Activated CD4-positive, alpha-beta T cell treated with anti-CD3 and anti-CD28 coated beads, Interleukin-2, amount 10 ng/mL, durations not matched to agents 24 days and 14 days (primary cell): ENCODE measurements at regions of chr20 and their contacts with region 1.

Region 1: GRCh38 chr20:43448748-43449535 is 8.8 kb upstream of the SRSF6 start:
- DNase-seq: peak; percentile 82
- H3K4me3 Mint-ChIP-seq: no peak overlapping the region
- H3K27ac Mint-ChIP-seq: no peak overlapping the region
- H3K4me1 Mint-ChIP-seq: peaks cover 3% of the 10 kb centered on the region
- H3K27me3 Mint-ChIP-seq: peaks cover 23% of the 10 kb centered on the region

Region 2: DNA sequence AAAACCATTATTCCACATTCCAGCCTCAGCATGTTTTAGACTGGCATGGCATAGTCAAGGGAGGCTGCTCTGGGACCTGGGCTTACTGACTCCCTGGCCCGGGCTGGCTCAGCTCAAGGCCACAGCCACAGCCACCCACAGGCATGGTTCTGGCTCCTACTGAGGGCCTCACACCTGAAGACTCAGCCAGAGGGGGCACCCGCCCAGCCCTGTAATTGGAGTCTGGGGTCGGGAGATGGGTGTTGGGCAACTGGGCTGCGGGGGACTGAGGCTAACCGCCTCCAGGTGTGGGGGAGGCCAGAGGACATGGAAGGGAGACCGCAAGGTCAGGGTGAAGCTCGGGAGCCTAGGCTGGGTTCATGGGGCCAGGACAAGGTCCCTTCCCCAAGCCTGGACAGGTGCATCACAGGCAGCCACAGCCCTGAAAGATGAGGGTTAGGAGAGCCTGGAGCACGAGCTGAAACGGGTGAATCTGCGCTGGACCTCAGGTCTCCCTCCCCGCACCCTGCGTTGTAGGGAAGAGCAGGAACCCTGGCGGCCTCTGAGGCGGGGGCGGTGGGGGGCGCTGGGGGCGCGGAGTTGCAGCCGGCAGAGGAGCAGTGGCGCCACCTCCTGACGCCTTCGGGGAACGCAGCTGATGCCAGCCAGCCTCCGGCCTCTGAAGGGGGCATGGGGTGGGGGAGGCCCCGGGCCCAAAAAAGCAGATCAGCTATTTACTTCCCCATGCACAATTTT is 58.9 kb before region 1 on chr20:
- intact Hi-C with region 1: no loop called
- DNase-seq: no peak
- H3K4me3 Mint-ChIP-seq: no peak overlapping the region
- H3K27ac Mint-ChIP-seq: no peak overlapping the region
- H3K4me1 Mint-ChIP-seq: no peaks in the 10 kb centered on the region
- H3K27me3 Mint-ChIP-seq: peaks cover 5% of the 10 kb centered on the region

Region 3: DNA sequence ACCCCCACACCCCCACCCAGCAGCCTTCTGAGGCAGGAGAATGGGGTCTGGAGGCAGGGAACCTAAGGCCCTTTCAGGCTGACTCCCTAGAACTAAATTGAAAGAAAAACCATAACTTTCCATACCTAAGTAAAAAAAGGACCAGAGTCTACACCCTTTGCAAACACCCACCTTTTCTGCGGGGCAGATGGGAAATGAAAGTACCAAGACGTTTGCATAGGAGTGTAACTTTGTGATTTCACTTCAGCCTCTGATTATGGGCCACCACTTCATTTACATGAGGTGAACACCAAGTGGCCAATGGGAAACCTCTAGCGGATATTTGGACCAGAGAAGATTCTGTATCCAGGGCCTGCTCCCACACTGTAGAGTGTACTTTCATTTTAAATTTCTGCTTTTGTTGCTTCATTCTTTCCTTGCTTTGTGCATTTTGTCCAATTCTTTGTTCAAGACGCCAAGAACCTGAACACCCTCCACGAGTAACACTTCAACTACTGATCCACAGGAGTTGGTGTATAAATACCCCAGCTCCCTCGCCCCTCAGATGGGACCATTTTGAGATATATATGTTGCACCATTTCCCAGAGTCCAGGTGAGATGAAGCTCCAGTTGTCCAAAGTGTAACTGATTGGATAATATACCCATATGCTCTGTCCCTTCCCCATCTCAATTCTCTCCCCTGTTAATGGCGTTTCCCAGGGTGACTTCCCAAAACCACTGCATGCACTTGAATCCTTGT is 10.2 kb before region 1 on chr20:
- intact Hi-C with region 1: no loop called
- DNase-seq: no peak
- H3K4me3 Mint-ChIP-seq: no peak overlapping the region
- H3K27ac Mint-ChIP-seq: no peak overlapping the region
- H3K4me1 Mint-ChIP-seq: peaks cover 2% of the 10 kb centered on the region
- H3K27me3 Mint-ChIP-seq: peaks cover 6% of the 10 kb centered on the region

Region 4: DNA sequence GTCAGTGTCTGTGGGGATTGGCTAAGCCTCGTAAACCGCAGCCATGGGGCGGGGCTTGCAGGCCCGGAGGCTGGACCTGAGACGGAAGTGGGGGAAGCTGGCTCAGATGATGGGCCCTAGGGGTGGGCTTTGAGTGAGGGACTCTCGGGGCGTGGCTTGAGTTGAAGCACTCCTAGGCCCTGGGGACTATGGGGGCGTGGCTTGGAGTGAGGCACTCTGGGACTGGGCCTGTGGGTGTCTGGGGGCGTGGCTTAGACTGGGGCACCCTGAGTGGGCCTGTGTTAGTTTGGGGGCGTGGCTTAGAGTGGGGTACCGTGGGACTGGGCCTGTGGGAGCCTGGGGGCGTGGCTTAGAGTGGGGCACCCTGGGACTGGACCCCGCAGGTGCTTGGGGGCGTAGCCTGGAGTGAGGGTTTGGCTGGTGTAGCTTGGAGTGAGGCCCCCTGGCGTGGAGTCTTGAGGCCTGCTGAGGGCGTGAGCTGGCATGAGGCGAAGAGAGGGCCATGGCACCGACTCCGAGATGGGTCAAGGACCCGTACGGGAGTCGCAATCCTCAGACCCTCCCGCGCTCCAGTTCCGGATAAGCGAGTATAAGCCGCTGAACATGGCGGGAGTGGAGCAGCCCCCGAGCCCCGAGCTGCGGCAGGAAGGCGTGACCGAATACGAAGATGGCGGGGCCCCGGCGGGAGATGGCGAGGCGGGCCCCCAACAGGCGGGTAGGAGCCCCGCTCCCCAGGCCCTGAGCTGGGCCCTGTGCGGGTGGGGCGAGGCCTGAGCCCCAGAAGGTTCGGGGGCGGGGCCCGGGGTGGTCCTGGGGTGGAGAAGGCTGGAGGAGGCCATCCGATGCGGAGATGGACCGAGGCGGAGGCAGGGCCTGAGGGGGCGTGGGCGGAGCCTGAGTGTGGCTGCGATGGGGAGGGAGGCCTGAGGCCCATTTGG is 65.4 kb after region 1 on chr20:
- intact Hi-C with region 1: loop called (anchors 1 kb)
- DNase-seq: peak; percentile 97
- H3K4me3 Mint-ChIP-seq: peak overlapping the region; percentile 97
- H3K27ac Mint-ChIP-seq: peak overlapping the region; percentile 93
- H3K4me1 Mint-ChIP-seq: peaks cover 6% of the 10 kb centered on the region
- H3K27me3 Mint-ChIP-seq: peaks cover 2% of the 10 kb centered on the region

Region 5: DNA sequence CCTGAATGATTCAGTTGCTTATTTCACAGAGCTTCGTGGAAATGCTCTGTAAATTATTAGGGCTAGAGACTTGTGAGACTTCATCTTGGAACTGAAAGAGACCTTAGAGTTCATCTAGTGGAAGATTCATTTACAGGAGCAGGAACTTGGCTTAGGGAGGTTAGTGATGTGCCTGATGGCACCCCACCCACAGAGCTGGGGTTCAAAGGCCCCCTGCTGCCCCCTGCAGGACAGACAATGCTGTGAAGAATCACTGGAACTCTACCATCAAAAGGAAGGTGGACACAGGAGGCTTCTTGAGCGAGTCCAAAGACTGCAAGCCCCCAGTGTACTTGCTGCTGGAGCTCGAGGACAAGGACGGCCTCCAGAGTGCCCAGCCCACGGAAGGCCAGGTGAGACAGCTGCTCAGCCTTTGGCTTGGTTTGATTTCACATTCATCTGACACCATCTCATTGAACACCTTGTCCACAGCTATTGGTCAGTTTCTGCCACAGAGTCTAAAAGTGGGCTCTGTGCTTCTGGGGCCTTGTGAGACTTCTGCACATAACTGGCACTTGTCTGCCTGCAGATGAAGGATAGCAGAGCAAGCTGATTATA is 243.1 kb after region 1 on chr20:
- intact Hi-C with region 1: loop called (anchors 1 kb)
- DNase-seq: peak; percentile 88
- H3K4me3 Mint-ChIP-seq: no peak overlapping the region
- H3K27ac Mint-ChIP-seq: no peak overlapping the region
- H3K4me1 Mint-ChIP-seq: peaks cover 11% of the 10 kb centered on the region
- H3K27me3 Mint-ChIP-seq: no peaks in the 10 kb centered on the region

Region 6: DNA sequence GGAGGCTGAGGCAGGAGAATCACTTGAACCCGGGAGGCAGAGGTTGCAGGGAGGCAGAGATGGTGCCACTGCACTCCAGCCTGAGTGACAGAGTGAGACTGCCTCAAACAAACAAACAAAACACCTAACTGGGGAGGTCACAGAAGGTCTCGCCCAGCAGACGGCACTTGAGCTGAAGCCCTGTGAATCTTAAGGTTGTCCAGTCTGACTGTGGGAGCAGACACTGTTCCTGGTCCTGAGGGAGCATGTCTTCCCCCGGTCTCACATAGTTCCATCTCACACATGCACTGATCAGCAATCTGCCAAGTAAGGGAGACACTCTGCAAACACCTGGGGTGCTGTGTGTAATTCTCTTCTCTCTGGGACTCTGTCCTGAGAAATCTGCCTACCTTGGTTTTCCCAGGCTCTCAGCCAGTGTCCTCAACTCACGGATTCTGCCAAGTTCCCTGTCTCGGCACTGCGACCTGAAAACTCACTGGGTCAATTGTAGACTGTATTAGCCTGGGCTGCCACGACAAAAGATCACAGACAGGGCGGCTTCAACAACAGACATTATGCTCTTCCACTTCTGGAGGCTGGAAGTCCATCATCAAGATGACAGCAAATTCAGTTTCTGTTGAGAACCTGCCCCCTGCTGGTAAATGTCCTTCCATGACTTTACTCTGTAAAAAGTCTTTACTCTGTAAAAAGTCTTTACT is 643.8 kb after region 1 on chr20:
- intact Hi-C with region 1: loop called (anchors 1 kb)
- DNase-seq: peak; percentile 80
- H3K4me3 Mint-ChIP-seq: no peak overlapping the region
- H3K27ac Mint-ChIP-seq: no peak overlapping the region
- H3K4me1 Mint-ChIP-seq: peaks cover 5% of the 10 kb centered on the region
- H3K27me3 Mint-ChIP-seq: peaks cover 6% of the 10 kb centered on the region